Naive thymus-derived CD8-positive, alpha-beta T cell (primary cell): ENCODE measurements at regions of chr9 and their contacts with region 1.

Region 1: DNA sequence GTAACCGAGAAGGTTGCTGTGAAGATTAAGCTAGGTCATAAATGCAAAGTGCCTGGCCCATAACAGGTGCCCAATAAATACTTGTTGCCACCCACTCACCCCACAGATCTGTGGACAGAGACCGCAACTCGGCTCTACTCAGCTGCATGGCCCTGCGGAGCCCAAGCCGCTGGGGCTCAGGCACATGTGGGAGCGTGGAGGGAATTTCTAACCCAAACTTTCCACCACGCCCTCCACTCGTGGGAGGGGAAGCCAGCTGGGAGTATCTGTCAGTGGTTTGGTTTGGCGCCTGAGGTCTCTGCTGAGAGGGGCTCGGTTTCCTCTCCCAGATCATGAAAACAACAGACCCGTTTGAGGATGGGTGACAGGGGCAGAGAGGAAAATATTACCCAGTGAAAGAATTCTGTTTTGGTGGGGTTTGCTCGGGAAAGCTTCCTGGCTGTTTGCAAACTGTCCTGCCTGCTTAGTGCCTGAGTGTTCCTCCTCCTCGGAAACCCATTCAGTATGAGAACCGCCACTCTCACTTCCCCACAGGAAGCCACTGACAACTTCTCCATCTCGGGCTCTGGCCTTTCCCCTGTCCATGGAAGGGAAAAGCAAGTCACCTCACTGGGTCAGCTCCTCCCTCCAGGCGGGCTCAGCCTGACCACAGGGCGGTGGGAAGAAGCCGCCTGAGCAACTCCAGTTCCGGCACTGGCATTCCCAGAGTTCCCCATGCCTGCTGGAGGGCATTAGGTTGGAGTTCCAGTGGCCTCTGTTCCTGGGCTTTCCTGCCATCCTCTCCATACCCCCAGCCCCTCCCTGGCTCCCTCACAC is 60.1 kb downstream of the RGS3 start:
- DNase-seq: peak in 9 of 10 donors; percentile 21 to 71 (median 45)
- ATAC-seq: peak; percentile 50 to 64
- H3K4me3 Mint-ChIP-seq: peak overlapping the region; percentile 69 to 91 (median 82)
- H3K27ac Mint-ChIP-seq: peak overlapping the region; percentile 74 to 98 (median 96)
- H3K4me1 Mint-ChIP-seq: peaks cover 53 to 97% (median 93%) of the 10 kb centered on the region in 4 donors
- H3K27me3 Mint-ChIP-seq: no peaks in the 10 kb centered on the region

Region 2: DNA sequence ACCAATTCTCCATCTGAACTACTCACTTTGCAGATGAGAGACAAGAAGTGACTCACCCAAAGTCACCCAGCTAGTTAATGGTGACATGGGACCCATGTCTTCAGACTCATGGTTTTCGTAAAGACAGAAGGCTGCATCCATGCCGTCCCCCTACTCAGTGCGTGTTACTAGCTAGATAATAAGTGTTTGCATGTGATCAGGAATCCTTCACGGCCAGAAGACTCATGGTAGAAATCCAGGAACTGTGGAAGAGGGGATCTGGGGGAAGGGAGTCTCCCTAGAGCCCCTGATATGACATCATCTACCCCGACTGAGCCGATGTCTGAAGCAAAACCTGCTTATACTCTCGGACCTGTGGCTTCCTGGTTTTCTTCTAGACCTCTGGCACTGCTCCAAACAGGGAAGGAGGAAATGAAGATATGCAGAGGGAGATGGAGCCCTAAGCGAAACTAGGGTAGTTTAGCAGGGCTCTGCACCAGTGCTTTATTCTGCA is 223.8 kb before region 1 on chr9:
- POLR2A ChIA-PET with region 1: no interaction called
- DNase-seq: no peak
- ATAC-seq: no peak
- H3K4me3 Mint-ChIP-seq: no peak overlapping the region
- H3K27ac Mint-ChIP-seq: peak overlapping the region in 2 of 10 donors; percentile 43 to 54
- H3K4me1 Mint-ChIP-seq: peaks cover 0 to 2% (median 0%) of the 10 kb centered on the region in 4 donors
- H3K27me3 Mint-ChIP-seq: peaks cover 0 to 11% (median 4%) of the 10 kb centered on the region in 5 donors

Region 3: GRCh38 chr9:113578882-113579282 is 55.3 kb after region 1 on chr9:
- POLR2A ChIA-PET with region 1: interaction called, 45 read pairs
- DNase-seq: peak; percentile 46 to 87 (median 69)
- ATAC-seq: peak; percentile 69
- H3K4me3 Mint-ChIP-seq: peak overlapping the region; percentile 49 to 92 (median 80)
- H3K27ac Mint-ChIP-seq: peak overlapping the region; percentile 87 to 97 (median 95)
- H3K4me1 Mint-ChIP-seq: peaks cover 48 to 88% (median 84%) of the 10 kb centered on the region in 4 donors
- H3K27me3 Mint-ChIP-seq: no peaks in the 10 kb centered on the region